ENCODE measurements at regions of chr1 and their contacts with region 1.

Region 1: DNA sequence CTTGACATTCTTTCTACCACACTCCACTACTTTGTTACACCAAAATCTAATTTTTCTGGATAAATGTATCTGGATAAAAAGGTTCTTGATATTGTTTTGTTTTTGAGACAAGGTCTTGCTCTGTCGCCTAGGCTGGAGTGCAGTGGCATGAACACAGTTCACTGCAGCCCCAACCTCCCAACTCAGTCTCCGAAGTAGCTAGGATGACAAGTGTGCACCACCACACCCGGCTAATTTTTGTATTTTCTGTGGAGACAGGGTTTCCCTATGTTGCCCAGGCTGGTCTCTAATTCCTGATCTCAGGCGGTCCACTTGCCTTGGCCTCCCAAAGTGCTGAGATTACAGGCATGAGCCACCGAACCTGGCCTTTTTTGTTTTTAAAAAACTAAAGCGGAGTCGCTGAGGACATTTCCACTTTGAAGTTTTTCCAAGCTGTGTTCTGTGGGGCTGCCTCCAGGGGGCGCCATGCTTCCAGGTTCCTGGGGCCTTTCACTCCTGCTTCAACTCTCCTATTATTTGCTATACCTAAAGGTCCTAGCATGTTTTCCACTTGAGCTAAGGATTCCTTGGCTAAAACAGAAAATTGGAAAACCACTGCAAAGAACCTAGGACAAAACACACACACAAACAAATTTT is 14.1 kb upstream of the NCMAP start:
- DNase-seq: peak in 1 of 2 experiments; percentile 21
- H3K4me3 ChIP-seq: no peak overlapping the region
- H3K4me3 Mint-ChIP-seq: peak overlapping the region; percentile 44
- H3K27ac Mint-ChIP-seq: no peak overlapping the region
- H3K4me1 ChIP-seq: peaks cover 43% of the 10 kb centered on the region
- H3K4me1 Mint-ChIP-seq: peaks cover 26% of the 10 kb centered on the region
- H3K27me3 ChIP-seq: no peaks in the 10 kb centered on the region
- H3K27me3 Mint-ChIP-seq: no peaks in the 10 kb centered on the region
- CTCF ChIP-seq: peak; percentile 57 to 61

Region 2: DNA sequence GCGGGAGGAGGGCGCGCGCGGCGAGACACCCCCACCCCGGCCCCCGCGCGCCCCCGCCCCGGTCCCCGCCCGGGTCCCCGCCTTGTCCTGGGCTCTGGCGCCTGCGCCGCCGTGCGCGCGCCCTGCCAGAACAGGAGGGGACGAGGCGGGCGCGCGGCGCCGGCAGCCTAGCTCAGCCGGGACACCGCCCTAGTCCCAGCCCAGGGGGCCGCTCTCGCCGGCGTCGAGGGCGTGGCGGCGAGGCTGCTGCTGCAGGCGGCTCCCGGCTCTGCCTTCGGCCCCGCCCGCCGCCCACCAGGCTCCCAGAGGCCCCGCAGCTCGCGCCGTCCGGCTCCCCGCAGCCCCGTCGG is 39.1 kb before region 1 on chr1 and contains the start of gene RCAN3:
- CTCF ChIA-PET with region 1: interaction called, 7 read pairs
- POLR2A ChIA-PET with region 1: interaction called, 14 read pairs
- intact Hi-C with region 1: loop called (anchors 1 kb)
- DNase-seq: peak; percentile 82 to 91
- H3K4me3 ChIP-seq: peak within 1 kb of the TSS; percentile 73
- H3K4me3 Mint-ChIP-seq: peak within 1 kb of the TSS; percentile 84
- H3K27ac Mint-ChIP-seq: peak within 1 kb of the TSS; percentile 83
- H3K4me1 ChIP-seq: peaks cover 5% of the 10 kb centered on the region; the same call in 1 of the 2 replicates
- H3K4me1 Mint-ChIP-seq: peaks cover 7% of the 10 kb centered on the region
- H3K27me3 ChIP-seq: no peaks in the 10 kb centered on the region
- H3K27me3 Mint-ChIP-seq: no peaks in the 10 kb centered on the region
- CTCF ChIP-seq: no peak
- total RNA-seq, gene RCAN3: 9.9 and 10.2 TPM in 2 replicates

Region 3: DNA sequence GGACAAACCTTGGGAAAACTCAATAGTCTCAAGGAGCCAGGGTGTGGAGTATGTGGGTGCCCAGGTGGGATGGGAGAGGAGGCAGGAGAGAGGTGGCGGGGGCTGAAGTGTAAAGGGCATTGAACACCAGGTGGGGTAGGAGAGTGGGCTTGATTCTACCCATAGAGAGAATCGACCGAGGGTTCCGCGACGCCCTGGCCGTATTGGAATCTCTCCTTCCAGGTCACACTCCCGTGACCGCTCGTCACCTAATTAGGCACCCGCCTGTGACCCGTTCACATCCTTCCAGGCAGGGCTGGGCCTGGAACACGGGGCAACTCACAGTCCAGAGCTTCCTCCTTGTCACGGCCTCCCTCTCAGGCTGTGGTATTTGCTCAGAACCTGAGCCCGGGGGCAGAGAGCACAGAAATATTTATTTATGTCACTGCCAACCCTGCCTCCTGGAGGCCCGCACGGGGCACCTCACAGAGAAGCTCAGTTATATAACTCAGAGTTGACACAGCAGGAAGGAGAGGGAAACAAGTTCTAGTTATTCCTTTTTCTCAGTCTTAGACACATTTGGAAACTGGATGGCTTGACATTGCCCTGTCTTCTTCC is 26.1 kb after region 1 on chr1:
- CTCF ChIA-PET with region 1: interaction called, 5 read pairs
- POLR2A ChIA-PET with region 1: no interaction called
- intact Hi-C with region 1: loop called (anchors 1 kb)
- DNase-seq: peak; percentile 57 to 68
- H3K4me3 ChIP-seq: no peak overlapping the region
- H3K4me3 Mint-ChIP-seq: no peak overlapping the region
- H3K27ac Mint-ChIP-seq: no peak overlapping the region
- H3K4me1 ChIP-seq: 0 out of 2 replicates have a peak, but pooled peaks cover 9% of the 10 kb centered on the region
- H3K4me1 Mint-ChIP-seq: no peaks in the 10 kb centered on the region
- H3K27me3 ChIP-seq: no peaks in the 10 kb centered on the region
- H3K27me3 Mint-ChIP-seq: no peaks in the 10 kb centered on the region
- CTCF ChIP-seq: peak in 1 of 2 experiments; percentile 8

Region 4: DNA sequence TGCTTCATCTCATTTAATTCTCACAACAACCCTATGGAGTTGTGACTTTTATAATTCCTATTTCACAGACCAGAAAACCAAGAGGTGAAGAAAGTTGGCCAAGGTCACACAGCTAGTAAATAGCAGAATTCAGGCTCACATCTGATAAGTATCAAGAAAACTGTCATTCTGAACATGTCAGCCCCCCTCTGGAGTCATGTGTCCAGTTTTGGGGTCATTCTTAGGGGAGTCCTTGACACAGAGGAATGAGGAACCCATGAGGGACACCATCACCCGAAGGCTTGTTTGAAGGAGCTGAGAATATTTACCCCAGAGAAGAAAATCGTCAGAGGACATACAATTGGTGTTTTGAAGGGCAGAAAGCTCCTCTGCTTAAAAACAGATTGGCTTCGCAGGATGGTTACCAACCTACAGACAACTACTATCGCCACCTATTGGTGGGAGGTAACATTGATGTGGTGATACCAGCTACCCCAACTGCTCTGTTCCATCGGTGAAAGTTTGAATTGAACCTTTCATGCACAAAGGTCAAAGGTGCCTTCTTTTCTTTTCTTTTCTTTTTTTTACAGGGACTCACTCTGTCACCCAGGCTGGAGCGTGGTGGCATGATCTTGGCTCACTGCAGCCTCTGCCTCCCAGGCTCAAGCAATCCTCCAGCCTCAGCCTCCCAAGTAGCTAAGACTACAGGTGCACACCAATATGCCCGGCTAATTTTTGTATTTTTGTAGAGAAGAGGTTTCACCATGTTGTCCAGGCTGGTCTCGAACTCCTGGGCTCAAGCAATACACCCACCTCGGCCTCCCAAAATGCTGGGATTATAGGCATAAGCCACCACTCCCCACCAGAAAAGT is 45.4 kb after region 1 on chr1:
- CTCF ChIA-PET with region 1: interaction called, 13 read pairs
- POLR2A ChIA-PET with region 1: no interaction called
- intact Hi-C with region 1: loop called (anchors 5 kb)
- DNase-seq: peak; percentile 45 to 66
- H3K4me3 ChIP-seq: no peak overlapping the region
- H3K4me3 Mint-ChIP-seq: no peak overlapping the region
- H3K27ac Mint-ChIP-seq: no peak overlapping the region
- H3K4me1 ChIP-seq: no peaks in the 10 kb centered on the region
- H3K4me1 Mint-ChIP-seq: peaks cover 7% of the 10 kb centered on the region
- H3K27me3 ChIP-seq: no peaks in the 10 kb centered on the region
- H3K27me3 Mint-ChIP-seq: no peaks in the 10 kb centered on the region
- CTCF ChIP-seq: peak; percentile 46 to 70

Region 5: DNA sequence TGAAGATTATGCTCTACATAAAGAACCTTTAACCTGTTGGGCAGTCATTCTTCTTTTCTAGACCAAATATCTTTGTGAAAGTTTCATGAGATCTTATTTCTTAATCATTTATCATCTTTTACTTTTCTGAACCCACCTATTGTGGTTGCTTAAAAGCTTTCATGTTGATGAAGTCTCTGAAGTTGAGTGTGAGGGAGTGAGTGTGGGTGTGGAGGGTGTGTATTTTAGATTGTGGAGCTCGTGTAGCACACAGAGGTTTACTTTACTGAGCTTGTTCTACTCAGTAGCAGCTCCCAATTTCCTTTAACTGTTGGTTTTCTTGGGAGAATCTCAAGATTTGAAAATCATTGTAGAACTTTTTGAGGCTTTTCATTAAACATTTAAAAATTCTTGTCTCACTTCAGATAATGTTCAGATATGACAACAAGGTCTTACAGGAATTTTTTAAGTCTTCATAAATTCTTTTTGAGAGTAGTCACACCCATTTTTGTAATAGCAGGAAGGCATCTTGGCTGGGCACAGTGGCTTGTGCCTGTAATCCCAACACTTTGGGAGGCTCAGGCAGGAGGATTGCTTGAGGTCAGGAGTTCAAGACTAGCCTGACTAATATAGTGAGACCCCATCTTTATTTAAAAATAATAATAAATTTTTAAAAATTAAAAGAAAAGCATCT is 118.3 kb after region 1 on chr1:
- CTCF ChIA-PET with region 1: no interaction called
- POLR2A ChIA-PET with region 1: no interaction called
- intact Hi-C with region 1: no loop called
- DNase-seq: no peak
- H3K4me3 ChIP-seq: no peak overlapping the region
- H3K4me3 Mint-ChIP-seq: no peak overlapping the region
- H3K27ac Mint-ChIP-seq: no peak overlapping the region
- H3K4me1 ChIP-seq: no peaks in the 10 kb centered on the region
- H3K4me1 Mint-ChIP-seq: no peaks in the 10 kb centered on the region
- H3K27me3 ChIP-seq: no peaks in the 10 kb centered on the region
- H3K27me3 Mint-ChIP-seq: no peaks in the 10 kb centered on the region
- CTCF ChIP-seq: no peak

Measured in Caco-2 (cell line).